B cell (primary cell): ENCODE measurements at regions of chr11 and their contacts with region 1.

Region 1: GRCh38 chr11:62665075-62665598 is at the starts of genes C11orf98 and CSKMT:
- DNase-seq: peak; percentile 95
- ATAC-seq: peak; percentile 90
- H3K4me3 ChIP-seq: peak within 1 kb of the TSS; percentile 79 to 98 (median 91)
- H3K4me3 Mint-ChIP-seq: peak within 1 kb of the TSS; percentile 97
- H3K27ac ChIP-seq: peak within 1 kb of the TSS; percentile 73 to 81
- H3K27ac Mint-ChIP-seq: peak within 1 kb of the TSS; percentile 93
- H3K4me1 ChIP-seq: peaks cover 17 to 35% of the 10 kb centered on the region in 2 donors
- H3K4me1 Mint-ChIP-seq: peaks cover 45% of the 10 kb centered on the region
- H3K27me3 ChIP-seq: no peaks in the 10 kb centered on the region
- H3K27me3 Mint-ChIP-seq: no peaks in the 10 kb centered on the region
- CTCF ChIP-seq: no peak
- total RNA-seq, gene C11orf98: 48.1 and 52.0 TPM in 2 replicates
- total RNA-seq, gene CSKMT: 57.3 and 78.7 TPM in 2 replicates

Region 2: DNA sequence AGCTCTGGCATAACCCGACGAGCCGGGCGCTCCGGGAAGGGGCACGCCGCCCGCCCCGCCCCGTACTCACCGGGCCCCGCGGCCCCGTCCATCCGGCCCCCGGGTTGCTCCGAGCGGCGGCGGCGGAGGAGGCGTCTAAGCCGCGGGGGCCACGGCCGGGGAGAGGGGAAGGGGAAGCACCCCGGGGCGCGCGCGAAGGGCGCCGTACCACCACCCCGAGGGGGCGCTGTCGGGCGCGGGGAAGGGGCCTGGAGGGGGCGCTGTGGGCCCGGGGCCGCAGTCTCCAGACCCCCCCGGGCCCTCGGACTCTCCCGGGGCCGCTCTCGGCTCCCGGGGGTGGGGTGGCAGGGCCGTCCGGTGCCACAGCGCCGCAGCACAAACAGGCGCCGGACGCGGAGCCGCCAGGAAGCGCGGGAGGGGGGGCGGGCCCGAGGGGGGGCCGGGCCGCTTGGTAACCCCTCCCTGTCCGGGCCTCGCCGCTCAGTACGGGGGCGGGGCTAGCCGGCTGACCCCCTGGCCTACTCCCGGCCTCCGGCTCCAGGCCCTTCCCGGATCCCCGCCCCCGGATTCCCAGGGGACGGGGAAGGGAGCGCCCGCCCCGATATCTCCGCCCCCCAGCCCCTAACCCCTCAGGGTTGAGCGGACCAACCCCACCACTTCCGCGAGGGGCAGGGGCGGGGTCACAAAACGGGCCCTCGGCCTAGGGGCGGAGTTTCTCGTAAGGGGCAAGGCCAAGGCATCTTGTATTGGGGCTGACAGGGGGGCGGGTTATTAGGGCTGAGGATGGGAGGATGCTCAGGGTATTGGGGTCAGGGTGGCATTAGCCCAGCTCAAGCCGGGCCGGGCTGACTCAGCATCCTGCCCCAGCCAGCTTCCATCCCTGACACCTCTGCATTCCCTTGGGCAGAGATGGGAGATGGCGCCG is 52.5 kb before region 1 on chr11 and contains the starts of genes EML3 and ROM1:
- CTCF ChIA-PET with region 1: interaction called, 4 read pairs
- POLR2A ChIA-PET with region 1: interaction called, 4 read pairs
- intact Hi-C with region 1: loop called (anchors 1 kb)
- DNase-seq: peak; percentile 92
- ATAC-seq: peak; percentile 79
- H3K4me3 ChIP-seq: peak within 1 kb of the TSS; percentile 70 to 84 (median 75)
- H3K4me3 Mint-ChIP-seq: peak within 1 kb of the TSS; percentile 97
- H3K27ac ChIP-seq: peak within 1 kb of the TSS; percentile 76 to 96
- H3K27ac Mint-ChIP-seq: peak within 1 kb of the TSS; percentile 99
- H3K4me1 ChIP-seq: peaks cover 10 to 25% of the 10 kb centered on the region in 2 donors
- H3K4me1 Mint-ChIP-seq: peaks cover 25% of the 10 kb centered on the region
- H3K27me3 ChIP-seq: no peaks in the 10 kb centered on the region
- H3K27me3 Mint-ChIP-seq: no peaks in the 10 kb centered on the region
- CTCF ChIP-seq: peak; percentile 99
- total RNA-seq, gene EML3: 127 and 135 TPM in 2 replicates
- total RNA-seq, gene ROM1: 0.68 and 2.0 TPM in 2 replicates

Region 3: GRCh38 chr11:62645956-62646824 is 18.9 kb before region 1 on chr11 and contains the start of gene GANAB:
- CTCF ChIA-PET with region 1: interaction called, 8 read pairs
- POLR2A ChIA-PET with region 1: interaction called, 32 read pairs
- intact Hi-C with region 1: loop called (anchors 1 kb)
- DNase-seq: peak; percentile 97
- ATAC-seq: peak; percentile 99
- H3K4me3 ChIP-seq: peak within 1 kb of the TSS; percentile 54 to 98 (median 90)
- H3K4me3 Mint-ChIP-seq: peak within 1 kb of the TSS; percentile 97
- H3K27ac ChIP-seq: peak within 1 kb of the TSS; percentile 75 to 89
- H3K27ac Mint-ChIP-seq: peak within 1 kb of the TSS; percentile 95
- H3K4me1 ChIP-seq: peaks cover 14 to 21% of the 10 kb centered on the region in 2 donors
- H3K4me1 Mint-ChIP-seq: peaks cover 26% of the 10 kb centered on the region
- H3K27me3 ChIP-seq: no peaks in the 10 kb centered on the region
- H3K27me3 Mint-ChIP-seq: no peaks in the 10 kb centered on the region
- CTCF ChIP-seq: no peak
- total RNA-seq, gene GANAB: 190 and 204 TPM in 2 replicates

Region 4: GRCh38 chr11:62678770-62679696 is 13.9 kb after region 1 on chr11 and contains the start of gene UBXN1:
- CTCF ChIA-PET with region 1: interaction called, 13 read pairs
- POLR2A ChIA-PET with region 1: interaction called, 16 read pairs
- intact Hi-C with region 1: loop called (anchors 2 kb)
- DNase-seq: peak; percentile 92
- ATAC-seq: peak; percentile 77
- H3K4me3 ChIP-seq: peak within 1 kb of the TSS; percentile 71 to 99 (median 98)
- H3K4me3 Mint-ChIP-seq: peak within 1 kb of the TSS; percentile 88
- H3K27ac ChIP-seq: peak within 1 kb of the TSS; percentile 83 to 99
- H3K27ac Mint-ChIP-seq: peak within 1 kb of the TSS; percentile 93
- H3K4me1 ChIP-seq: peaks cover 9 to 20% of the 10 kb centered on the region in 2 donors
- H3K4me1 Mint-ChIP-seq: peaks cover 34% of the 10 kb centered on the region
- H3K27me3 ChIP-seq: no peaks in the 10 kb centered on the region
- H3K27me3 Mint-ChIP-seq: no peaks in the 10 kb centered on the region
- CTCF ChIP-seq: no peak
- total RNA-seq, gene UBXN1: 186 and 193 TPM in 2 replicates